ENCODE measurements at regions of chr7 and their contacts with region 1.

Region 1: DNA sequence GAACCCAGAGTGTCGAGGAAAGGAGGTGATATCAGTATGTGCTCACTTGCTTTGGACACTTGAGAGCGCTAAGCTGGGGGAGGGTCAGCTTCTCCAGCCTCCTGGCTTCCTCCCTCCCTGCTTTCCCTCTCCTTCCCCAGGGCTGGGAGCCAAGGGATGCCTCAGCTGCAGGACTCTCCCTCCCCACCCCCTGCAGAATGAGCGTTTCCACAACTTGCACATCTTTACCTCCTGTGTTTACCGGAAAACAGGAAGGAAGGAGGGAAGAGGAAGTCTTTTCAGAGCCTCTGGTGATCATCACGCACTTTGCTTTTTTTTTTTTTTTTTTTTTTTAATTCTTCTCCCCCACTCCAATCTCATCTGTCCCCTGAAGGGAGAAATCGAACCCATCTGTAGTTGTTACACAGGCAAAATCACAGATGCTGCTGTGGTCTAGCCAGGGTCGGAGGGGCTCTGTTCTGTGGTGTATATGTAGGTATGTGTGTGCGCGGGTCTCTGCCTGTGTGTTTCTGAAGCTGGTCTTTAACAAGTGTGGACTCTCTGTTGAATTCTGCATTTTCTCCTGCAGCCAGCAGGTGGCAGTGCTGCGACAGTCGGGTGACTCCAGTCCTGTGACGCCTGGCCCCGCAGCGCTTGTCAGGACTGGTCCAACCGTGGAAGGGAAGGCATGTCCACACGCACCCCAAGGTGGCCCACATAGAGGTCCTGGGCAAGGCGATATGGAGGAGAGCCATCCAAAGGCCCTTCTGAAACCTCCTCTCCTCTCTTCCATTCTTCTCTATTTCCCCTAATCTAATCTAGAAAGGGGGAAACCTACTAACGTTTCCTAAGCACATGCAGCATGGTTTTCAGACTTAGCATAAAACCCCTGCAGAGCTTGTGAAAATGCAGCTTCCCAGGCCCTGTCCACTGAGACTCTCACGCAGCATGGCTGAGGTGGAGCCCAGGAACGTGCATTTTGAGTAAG is 257.6 kb downstream of the PLXNA4 start:
- DNase-seq: peak; percentile 59 to 86 (median 68)
- ATAC-seq: peak; percentile 84
- H3K4me3 ChIP-seq: no peak overlapping the region
- H3K4me3 Mint-ChIP-seq: peak overlapping the region; percentile 49
- H3K27ac ChIP-seq: no peak overlapping the region
- H3K27ac Mint-ChIP-seq: no peak overlapping the region
- H3K4me1 ChIP-seq: peaks cover 9% of the 10 kb centered on the region
- H3K4me1 Mint-ChIP-seq: peaks cover 17% of the 10 kb centered on the region
- H3K27me3 ChIP-seq: peaks cover 21% of the 10 kb centered on the region in 2 experiments
- H3K27me3 Mint-ChIP-seq: peaks cover 57% of the 10 kb centered on the region
- CTCF ChIP-seq: peak; percentile 82

Region 2: GRCh38 chr7:132580717-132581285 is 262.2 kb after region 1 on chr7:
- CTCF ChIA-PET with region 1: interaction called, 11 read pairs
- POLR2A ChIA-PET with region 1: no interaction called
- intact Hi-C with region 1: loop called in 1 of 2 experiments (anchors 1 kb)
- DNase-seq: peak; percentile 43 to 84 (median 58)
- ATAC-seq: peak; percentile 75
- H3K4me3 ChIP-seq: no peak overlapping the region
- H3K4me3 Mint-ChIP-seq: no peak overlapping the region
- H3K27ac ChIP-seq: no peak overlapping the region
- H3K27ac Mint-ChIP-seq: no peak overlapping the region
- H3K4me1 ChIP-seq: peaks cover 12% of the 10 kb centered on the region
- H3K4me1 Mint-ChIP-seq: peaks cover 12% of the 10 kb centered on the region
- H3K27me3 ChIP-seq: peaks cover 23 to 36% of the 10 kb centered on the region in 2 experiments
- H3K27me3 Mint-ChIP-seq: peaks cover 51% of the 10 kb centered on the region
- CTCF ChIP-seq: peak; percentile 80

Region 3: GRCh38 chr7:133230591-133231194 is 912.1 kb after region 1 on chr7:
- CTCF ChIA-PET with region 1: no interaction called
- POLR2A ChIA-PET with region 1: no interaction called
- intact Hi-C with region 1: loop called (anchors 2 to 5 kb)
- DNase-seq: peak in 11 of 14 experiments; percentile 1 to 70 (median 28)
- ATAC-seq: no peak
- H3K4me3 ChIP-seq: no peak overlapping the region
- H3K4me3 Mint-ChIP-seq: no peak overlapping the region
- H3K27ac ChIP-seq: no peak overlapping the region
- H3K27ac Mint-ChIP-seq: no peak overlapping the region
- H3K4me1 ChIP-seq: no peaks in the 10 kb centered on the region
- H3K4me1 Mint-ChIP-seq: no peaks in the 10 kb centered on the region
- H3K27me3 ChIP-seq: no peaks in the 10 kb centered on the region
- H3K27me3 Mint-ChIP-seq: no peaks in the 10 kb centered on the region
- CTCF ChIP-seq: peak; percentile 49

Region 4: GRCh38 chr7:133434055-133434865 is 1115.6 kb after region 1 on chr7:
- CTCF ChIA-PET with region 1: interaction called, 8 read pairs
- POLR2A ChIA-PET with region 1: no interaction called
- intact Hi-C with region 1: loop called (anchors 1 to 5 kb)
- DNase-seq: peak in 3 of 14 experiments; percentile 20 to 43 (median 37)
- ATAC-seq: no peak
- H3K4me3 ChIP-seq: no peak overlapping the region
- H3K4me3 Mint-ChIP-seq: no peak overlapping the region
- H3K27ac ChIP-seq: no peak overlapping the region
- H3K27ac Mint-ChIP-seq: peak overlapping the region; percentile 13
- H3K4me1 ChIP-seq: no peaks in the 10 kb centered on the region
- H3K4me1 Mint-ChIP-seq: peaks cover 16% of the 10 kb centered on the region
- H3K27me3 ChIP-seq: no peaks in the 10 kb centered on the region
- H3K27me3 Mint-ChIP-seq: no peaks in the 10 kb centered on the region
- CTCF ChIP-seq: peak; percentile 42

Region 5: DNA sequence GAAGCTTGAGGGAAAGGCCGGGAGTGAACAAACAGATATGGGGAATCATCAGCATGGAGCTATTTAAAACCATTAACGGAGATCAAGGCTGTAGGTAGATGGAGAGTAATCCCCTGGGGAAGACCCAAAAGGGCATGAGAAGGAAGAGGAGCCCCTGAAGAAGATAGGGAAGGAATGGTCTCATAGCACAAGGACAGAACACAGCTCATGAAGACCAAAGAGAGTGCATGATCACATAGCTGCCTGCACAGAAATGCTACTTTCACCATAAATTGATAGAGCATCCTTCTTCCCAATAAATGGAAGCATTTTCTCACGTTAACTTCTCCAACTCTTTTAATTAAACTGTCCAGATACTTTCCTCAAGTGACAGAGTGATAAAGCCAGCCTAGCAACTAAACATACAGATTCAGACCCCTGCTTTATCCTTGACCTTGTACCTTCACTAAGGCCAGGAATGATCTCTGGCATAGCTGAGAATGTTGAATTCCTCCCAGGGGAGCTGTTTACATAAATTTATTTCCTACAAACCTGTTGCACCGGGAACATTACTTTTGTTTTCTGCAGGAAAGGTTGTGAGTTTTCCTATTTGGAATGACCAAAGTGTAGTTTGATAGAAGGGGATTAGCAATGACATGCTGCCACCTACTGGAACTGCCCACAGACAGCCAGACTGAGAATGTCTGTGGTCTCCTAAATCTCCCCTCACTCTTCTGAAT is 1697.7 kb after region 1 on chr7:
- CTCF ChIA-PET with region 1: no interaction called
- POLR2A ChIA-PET with region 1: no interaction called
- intact Hi-C with region 1: loop called in 1 of 2 experiments (anchors 10 kb)
- DNase-seq: peak in 1 of 14 experiments; percentile 6
- ATAC-seq: no peak
- H3K4me3 ChIP-seq: no peak overlapping the region
- H3K4me3 Mint-ChIP-seq: no peak overlapping the region
- H3K27ac ChIP-seq: no peak overlapping the region
- H3K27ac Mint-ChIP-seq: no peak overlapping the region
- H3K4me1 ChIP-seq: no peaks in the 10 kb centered on the region
- H3K4me1 Mint-ChIP-seq: no peaks in the 10 kb centered on the region
- H3K27me3 ChIP-seq: no peaks in the 10 kb centered on the region
- H3K27me3 Mint-ChIP-seq: no peaks in the 10 kb centered on the region
- CTCF ChIP-seq: no peak

Region 6: DNA sequence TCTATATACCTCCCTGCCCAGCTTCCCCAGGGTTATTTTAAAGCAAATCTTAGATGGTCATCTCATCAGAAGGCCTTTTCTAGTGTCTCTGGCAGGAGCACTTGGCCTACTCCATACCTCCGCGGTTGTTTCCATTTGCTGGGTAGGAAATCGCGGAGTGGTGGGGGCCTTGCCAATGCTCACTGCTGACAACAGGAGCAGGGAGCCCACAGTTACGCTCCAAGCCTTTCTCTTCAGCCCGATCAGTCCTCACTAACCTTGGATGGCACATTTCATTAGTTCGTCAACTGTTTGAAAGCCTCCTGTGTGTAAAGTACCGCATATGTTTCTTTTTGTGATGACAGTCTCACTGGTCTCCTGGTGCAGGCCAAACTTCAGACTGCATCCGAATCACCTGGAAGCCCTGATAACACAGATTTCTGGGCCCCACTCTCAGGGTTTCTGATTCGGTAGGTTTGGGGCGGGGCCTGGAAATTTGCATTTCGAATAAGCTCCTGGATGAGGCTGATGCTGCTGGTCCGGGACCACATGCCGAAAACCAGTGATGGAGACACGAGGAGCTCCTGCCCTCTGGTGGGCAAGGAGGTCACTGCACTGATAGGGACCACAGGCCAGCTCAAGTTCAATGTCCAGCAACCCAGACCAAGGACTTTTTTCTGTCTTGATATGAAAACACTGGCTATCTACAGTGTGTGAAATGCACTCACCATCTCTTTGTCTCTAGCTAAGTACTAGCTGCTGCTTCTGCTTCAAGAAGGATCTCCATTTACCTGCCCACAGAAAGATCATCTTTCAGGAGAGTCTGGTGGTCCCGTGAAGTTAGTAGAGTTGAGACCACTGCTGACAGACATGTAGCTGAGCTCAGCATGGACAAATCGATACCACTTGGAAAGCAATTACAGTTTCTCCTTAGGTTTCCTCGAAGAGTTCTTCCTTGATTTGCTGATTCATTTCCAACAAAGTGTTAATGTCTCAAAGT is 1822.5 kb after region 1 on chr7:
- CTCF ChIA-PET with region 1: no interaction called
- POLR2A ChIA-PET with region 1: no interaction called
- intact Hi-C with region 1: loop called in 1 of 2 experiments (anchors 5 kb)
- DNase-seq: peak; percentile 7 to 65 (median 30)
- ATAC-seq: no peak
- H3K4me3 ChIP-seq: no peak overlapping the region
- H3K4me3 Mint-ChIP-seq: no peak overlapping the region
- H3K27ac ChIP-seq: no peak overlapping the region
- H3K27ac Mint-ChIP-seq: no peak overlapping the region
- H3K4me1 ChIP-seq: no peaks in the 10 kb centered on the region
- H3K4me1 Mint-ChIP-seq: no peaks in the 10 kb centered on the region
- H3K27me3 ChIP-seq: no peaks in the 10 kb centered on the region
- H3K27me3 Mint-ChIP-seq: no peaks in the 10 kb centered on the region
- CTCF ChIP-seq: peak; percentile 84

Measured in CD4-positive, alpha-beta T cell (primary cell).